ENCODE measurements at regions of chr13 and their contacts with region 1.

Region 1: DNA sequence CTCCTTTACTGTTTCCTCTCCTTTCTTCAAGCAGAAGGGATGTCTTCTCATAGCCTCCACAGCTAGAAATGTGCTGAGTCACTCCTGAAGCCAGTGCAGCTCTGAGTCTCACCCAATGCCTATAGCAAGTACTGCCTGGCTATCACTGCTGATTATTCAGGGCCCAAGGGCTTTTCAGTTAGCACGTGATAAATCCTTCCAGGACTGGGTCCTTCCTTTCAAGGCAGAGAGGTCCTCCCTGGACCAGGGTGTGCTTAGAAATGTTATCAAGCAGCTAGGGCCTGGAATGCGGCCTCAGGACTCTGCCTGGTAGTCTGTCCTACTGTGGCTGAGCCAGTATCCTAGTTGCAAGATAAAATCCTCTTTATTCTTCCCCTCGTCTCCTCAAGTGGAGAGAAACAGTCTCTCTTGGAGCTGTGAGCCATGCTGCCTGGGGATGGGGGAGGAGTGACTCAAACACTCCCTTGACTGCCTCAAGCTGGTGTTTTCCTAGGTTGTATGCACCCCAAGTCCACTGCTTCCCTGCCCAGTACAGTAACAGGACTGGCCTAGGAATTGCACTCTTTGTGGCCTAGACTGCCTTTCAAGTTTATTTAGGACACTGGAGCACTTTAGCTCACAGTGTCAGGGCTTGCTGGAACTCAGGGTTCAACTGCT is 198.7 kb upstream of the SERP2 start:
- DNase-seq: peak in 1 of 5 donors; percentile 42
- H3K4me3 ChIP-seq: no peak overlapping the region
- H3K27ac ChIP-seq: peak overlapping the region in 1 of 2 donors; percentile 21
- H3K4me1 ChIP-seq: peaks cover 5% of the 10 kb centered on the region
- H3K27me3 ChIP-seq: no peaks in the 10 kb centered on the region
- CTCF ChIP-seq: no peak
- EP300 ChIP-seq: no peak
- POLR2A ChIP-seq: no peak

Region 2: DNA sequence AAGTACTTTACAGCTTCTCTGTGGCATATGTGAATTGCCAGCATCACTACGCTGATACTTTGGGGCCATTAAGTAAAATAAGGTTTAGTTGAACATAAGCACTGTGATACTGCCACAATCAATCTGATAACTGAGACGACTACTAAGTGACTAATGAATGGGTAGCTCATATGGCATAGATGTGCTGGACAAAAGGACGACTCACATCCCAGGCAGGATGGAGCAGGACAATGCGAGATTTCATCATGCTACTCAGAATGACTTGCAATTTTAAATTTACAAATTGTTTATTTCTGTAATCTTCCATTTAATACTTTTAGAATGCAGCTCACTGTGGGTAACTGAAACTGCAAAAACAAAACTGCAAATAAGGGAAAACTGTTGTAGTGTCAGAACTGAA is 309.0 kb before region 1 on chr13:
- intact Hi-C with region 1: no loop called
- DNase-seq: no peak
- H3K4me3 ChIP-seq: no peak overlapping the region
- H3K27ac ChIP-seq: no peak overlapping the region
- H3K4me1 ChIP-seq: no peaks in the 10 kb centered on the region
- H3K27me3 ChIP-seq: peaks cover 3% of the 10 kb centered on the region
- CTCF ChIP-seq: no peak
- EP300 ChIP-seq: no peak
- POLR2A ChIP-seq: no peak

Region 3: DNA sequence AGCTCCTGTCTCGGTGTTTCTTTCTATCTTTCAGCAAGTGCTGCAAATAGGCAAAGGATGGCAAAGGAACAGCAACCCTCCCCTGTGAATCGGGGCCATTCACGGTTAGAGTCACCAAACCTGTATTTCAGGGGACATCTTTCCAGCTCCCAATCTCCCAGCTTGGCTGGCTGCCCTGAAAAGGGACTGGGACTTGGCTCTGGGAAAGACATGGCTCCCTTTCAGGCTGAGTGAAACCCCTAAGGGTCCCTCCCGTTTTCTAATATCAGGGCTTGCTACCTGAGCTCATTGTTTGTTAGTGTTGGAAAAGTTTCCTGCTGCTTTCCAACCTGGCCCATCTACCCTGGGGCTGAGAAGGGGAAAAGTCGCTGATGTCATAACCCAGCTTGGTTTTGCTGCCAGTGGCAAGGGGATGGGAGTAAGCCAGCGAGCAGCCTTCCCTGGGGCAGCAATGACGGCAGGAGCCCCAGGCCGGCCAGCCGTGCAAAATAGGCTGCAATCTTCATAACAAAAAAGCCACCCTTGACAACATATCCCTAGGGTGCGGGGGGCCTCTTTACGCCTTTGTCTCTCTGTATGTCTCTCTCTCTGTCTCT is 228.7 kb after region 1 on chr13:
- intact Hi-C with region 1: no loop called
- DNase-seq: no peak
- H3K4me3 ChIP-seq: no peak overlapping the region
- H3K27ac ChIP-seq: no peak overlapping the region
- H3K4me1 ChIP-seq: no peaks in the 10 kb centered on the region
- H3K27me3 ChIP-seq: no peaks in the 10 kb centered on the region
- CTCF ChIP-seq: no peak
- EP300 ChIP-seq: no peak
- POLR2A ChIP-seq: no peak

Region 4: GRCh38 chr13:45974500-45974899 is 1799.6 kb after region 1 on chr13:
- intact Hi-C with region 1: loop called in 1 of 4 experiments (anchors 10 kb)
- DNase-seq: no peak
- H3K4me3 ChIP-seq: no peak overlapping the region
- H3K27ac ChIP-seq: no peak overlapping the region
- H3K4me1 ChIP-seq: no peaks in the 10 kb centered on the region
- H3K27me3 ChIP-seq: no peaks in the 10 kb centered on the region
- CTCF ChIP-seq: no peak
- EP300 ChIP-seq: no peak
- POLR2A ChIP-seq: no peak

Measured in ovary (tissue), 10 donors.